Posterior vena cava (tissue), 2 donors: ENCODE measurements at regions of chr10 and their contacts with region 1.

Region 1: DNA sequence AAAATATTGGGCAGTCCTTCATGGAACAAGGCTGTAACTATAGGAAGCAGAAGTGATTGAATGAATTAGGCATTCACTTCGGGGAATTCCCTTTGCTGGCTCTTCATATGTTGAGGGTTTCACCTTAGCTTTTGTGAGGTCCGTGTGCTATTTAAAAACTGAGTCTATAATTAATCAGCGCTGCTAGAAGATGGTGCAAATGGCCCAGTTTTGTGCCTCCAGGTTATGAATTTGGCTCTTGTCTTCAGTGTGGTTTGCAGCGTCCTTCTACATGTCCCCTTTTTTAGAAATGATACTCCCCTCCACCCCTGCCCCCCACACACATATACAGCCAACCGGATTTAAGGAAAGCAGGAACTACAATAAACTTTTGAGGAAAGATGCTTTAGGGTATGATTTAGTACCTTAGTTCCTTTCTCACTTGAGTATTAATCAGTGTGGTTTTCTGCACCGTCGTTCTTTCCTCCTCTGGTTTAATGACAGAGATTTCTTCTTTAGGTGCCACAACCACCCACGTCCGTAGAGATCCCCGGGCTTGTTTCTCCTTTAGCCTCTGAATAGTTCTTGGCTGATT is 110.6 kb upstream of the SAMD8 start:
- DNase-seq: no peak

Region 2: GRCh38 chr10:74244097-74244685 is 756.6 kb before region 1 on chr10:
- intact Hi-C with region 1: loop called in 1 of 2 experiments (anchors 10 kb)
- DNase-seq: no peak

Region 3: GRCh38 chr10:74976565-74976964 is 24.3 kb before region 1 on chr10:
- intact Hi-C with region 1: loop called in 1 of 2 experiments (anchors 1 kb)
- DNase-seq: no peak